Activated T-helper 1 cell treated with anti-CD3 and anti-CD28 coated beads, Interleukin-12 subunit alpha, Interleukin-12 subunit beta, Interleukin-2, Interleukin-4 antibody, amounts not matched to agents 30 ng/mL and 10 ng/mL and 1 ng/mL, durations not matched to agents 14 hours and 24 hours and 36 hours (primary cell): ENCODE measurements at regions of chr16 and their contacts with region 1.

Region 1: GRCh38 chr16:78778101-78779004 is 678.9 kb downstream of the WWOX start:
- DNase-seq: peak; percentile 63
- H3K4me3 Mint-ChIP-seq: peak overlapping the region; percentile 57
- H3K27ac Mint-ChIP-seq: peak overlapping the region; percentile 77
- H3K4me1 Mint-ChIP-seq: peaks cover 73% of the 10 kb centered on the region
- H3K27me3 Mint-ChIP-seq: no peaks in the 10 kb centered on the region

Region 2: DNA sequence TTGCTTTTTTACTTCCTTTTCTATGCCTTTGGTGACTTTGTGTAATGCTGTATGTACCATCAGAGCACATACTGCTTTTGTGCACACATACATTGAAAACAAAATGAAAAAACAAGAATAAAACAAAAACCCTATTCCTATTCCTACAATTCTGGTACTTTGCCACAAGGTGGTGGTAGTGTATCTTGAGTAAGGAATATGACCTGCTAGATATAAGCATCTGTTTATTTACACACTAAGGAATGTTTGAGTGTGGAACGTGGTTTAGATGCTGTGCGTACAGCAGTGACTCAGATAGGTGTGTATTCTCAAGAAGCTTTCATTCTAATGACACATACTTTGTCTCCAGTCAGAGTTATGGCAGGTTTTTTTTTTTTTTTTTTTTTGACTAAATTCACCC is 72.7 kb before region 1 on chr16:
- intact Hi-C with region 1: loop called (anchors 1 kb)
- DNase-seq: peak; percentile 2
- H3K4me3 Mint-ChIP-seq: no peak overlapping the region
- H3K27ac Mint-ChIP-seq: no peak overlapping the region
- H3K4me1 Mint-ChIP-seq: peaks cover 14% of the 10 kb centered on the region
- H3K27me3 Mint-ChIP-seq: peaks cover 2% of the 10 kb centered on the region

Region 3: DNA sequence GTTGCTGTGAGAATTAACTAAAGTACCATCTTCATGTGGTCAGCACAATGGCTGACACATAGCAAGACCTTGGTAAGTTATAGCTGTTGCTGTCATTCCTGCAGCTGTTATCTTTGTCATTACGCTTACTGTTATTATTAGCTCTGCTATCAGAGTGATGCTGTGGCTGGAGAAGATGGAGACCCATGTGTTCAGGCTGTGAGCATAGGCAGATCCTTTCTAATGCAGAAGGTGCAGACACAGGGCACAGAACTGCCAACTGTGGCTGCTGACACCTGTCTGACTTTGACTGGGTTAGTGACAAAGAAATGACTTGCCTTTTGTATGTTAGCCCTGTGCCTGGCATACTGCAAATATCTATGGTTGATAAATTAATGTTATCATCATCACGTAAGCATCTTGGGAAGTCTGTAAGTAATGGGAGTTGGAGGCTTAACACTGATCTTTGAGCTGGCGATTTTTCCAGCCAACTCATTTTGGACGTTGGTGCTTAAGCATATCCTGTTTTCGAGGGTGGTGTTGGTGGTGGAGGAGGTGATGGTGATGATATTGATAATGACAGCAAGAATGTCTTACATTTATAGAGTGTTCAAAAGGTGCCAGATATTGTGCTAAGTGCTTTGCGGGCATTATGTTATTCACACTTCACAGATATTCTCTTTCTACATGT is 16.4 kb after region 1 on chr16:
- intact Hi-C with region 1: loop called (anchors 1 kb)
- DNase-seq: no peak
- H3K4me3 Mint-ChIP-seq: no peak overlapping the region
- H3K27ac Mint-ChIP-seq: peak overlapping the region; percentile 77
- H3K4me1 Mint-ChIP-seq: peaks cover 35% of the 10 kb centered on the region
- H3K27me3 Mint-ChIP-seq: no peaks in the 10 kb centered on the region

Region 4: GRCh38 chr16:78900044-78900811 is 121.9 kb after region 1 on chr16:
- intact Hi-C with region 1: loop called (anchors 1 kb)
- DNase-seq: no peak
- H3K4me3 Mint-ChIP-seq: no peak overlapping the region
- H3K27ac Mint-ChIP-seq: peak overlapping the region; percentile 51
- H3K4me1 Mint-ChIP-seq: peaks cover 42% of the 10 kb centered on the region
- H3K27me3 Mint-ChIP-seq: no peaks in the 10 kb centered on the region

Region 5: DNA sequence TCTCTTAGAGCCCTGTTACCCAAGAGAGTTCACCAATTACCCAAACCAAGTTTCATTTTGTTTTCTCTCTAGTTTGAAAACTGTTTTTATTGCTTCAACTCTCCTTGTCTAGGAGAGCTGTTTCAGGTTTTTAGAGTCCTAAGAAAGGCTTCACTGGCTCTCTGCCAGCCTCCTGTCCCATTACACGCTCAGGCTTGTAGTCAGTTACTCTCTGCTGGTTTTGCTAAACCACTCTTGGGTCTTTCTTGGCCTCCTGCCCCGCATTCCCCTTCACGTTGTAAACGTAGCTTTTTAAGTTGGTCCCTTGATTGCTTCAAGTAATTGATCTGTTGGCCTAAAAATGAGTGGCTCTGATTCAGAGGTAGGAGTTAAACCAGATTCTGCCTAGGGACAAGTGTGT is 293.1 kb after region 1 on chr16:
- intact Hi-C with region 1: loop called (anchors 1 kb)
- DNase-seq: no peak
- H3K4me3 Mint-ChIP-seq: no peak overlapping the region
- H3K27ac Mint-ChIP-seq: peak overlapping the region; percentile 21
- H3K4me1 Mint-ChIP-seq: peaks cover 74% of the 10 kb centered on the region
- H3K27me3 Mint-ChIP-seq: peaks cover 5% of the 10 kb centered on the region

Region 6: DNA sequence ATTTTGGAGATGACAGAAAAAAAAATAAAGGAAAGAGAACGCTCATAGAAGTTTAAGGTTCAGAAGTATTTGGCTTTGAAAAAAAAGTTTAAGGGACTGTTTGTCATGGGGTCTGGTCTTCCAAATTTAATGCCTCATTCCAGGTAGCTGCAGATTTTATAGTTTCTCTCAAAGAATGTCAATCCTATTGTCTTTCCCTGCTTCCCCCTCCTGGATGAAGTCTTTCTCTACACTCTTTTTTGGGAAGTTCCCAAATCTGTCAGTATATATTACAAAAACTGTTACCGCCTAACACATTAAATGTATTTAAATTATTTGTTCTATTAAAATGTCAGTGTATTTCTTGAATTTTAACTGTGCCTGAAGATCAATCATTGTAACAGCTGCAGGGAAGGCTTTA is 364.7 kb after region 1 on chr16:
- intact Hi-C with region 1: no loop called
- DNase-seq: no peak
- H3K4me3 Mint-ChIP-seq: no peak overlapping the region
- H3K27ac Mint-ChIP-seq: no peak overlapping the region
- H3K4me1 Mint-ChIP-seq: no peaks in the 10 kb centered on the region
- H3K27me3 Mint-ChIP-seq: no peaks in the 10 kb centered on the region

Region 7: GRCh38 chr16:79269211-79269863 is 491.0 kb after region 1 on chr16:
- intact Hi-C with region 1: loop called (anchors 1 kb)
- DNase-seq: peak; percentile 58
- H3K4me3 Mint-ChIP-seq: peak overlapping the region; percentile 60
- H3K27ac Mint-ChIP-seq: peak overlapping the region; percentile 89
- H3K4me1 Mint-ChIP-seq: peaks cover 88% of the 10 kb centered on the region
- H3K27me3 Mint-ChIP-seq: peaks cover 12% of the 10 kb centered on the region

Region 8: GRCh38 chr16:79843631-79844043 is 1065.3 kb after region 1 on chr16:
- intact Hi-C with region 1: loop called (anchors 5 kb)
- DNase-seq: no peak
- H3K4me3 Mint-ChIP-seq: peak overlapping the region; percentile 45
- H3K27ac Mint-ChIP-seq: peak overlapping the region; percentile 70
- H3K4me1 Mint-ChIP-seq: peaks cover 42% of the 10 kb centered on the region
- H3K27me3 Mint-ChIP-seq: no peaks in the 10 kb centered on the region